Calu3 (cell line): ENCODE measurements at regions of chr19 and their contacts with region 1.

Region 1: GRCh38 chr19:6138066-6138465 is 2.6 kb downstream of the ACSBG2 start:
- DNase-seq: no peak
- H3K4me3 Mint-ChIP-seq: no peak overlapping the region
- H3K27ac Mint-ChIP-seq: no peak overlapping the region
- H3K4me1 Mint-ChIP-seq: no peaks in the 10 kb centered on the region
- H3K27me3 Mint-ChIP-seq: no peaks in the 10 kb centered on the region
- CTCF ChIP-seq: no peak

Region 2: DNA sequence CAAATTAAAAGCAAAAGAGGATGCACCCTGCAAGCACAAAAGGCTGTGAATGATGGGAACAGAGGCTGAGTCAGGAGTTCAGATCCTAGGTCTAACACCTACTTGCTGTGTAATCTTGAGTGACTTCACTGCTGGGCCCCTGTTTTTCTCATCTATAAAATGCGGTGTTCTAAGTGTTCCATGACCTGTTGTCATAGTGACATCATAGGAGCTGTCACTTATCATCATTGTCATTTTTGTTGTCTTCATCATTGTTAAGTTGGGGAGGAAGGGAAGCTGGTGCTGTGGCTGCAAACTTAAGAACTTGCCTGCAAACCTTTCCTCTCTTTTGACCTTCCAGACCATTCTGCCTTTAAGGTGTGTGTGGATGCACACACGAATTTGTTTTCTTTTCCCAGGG is 18.0 kb after region 1 on chr19:
- CTCF ChIA-PET with region 1: interaction called, 10 read pairs
- intact Hi-C with region 1: no loop called
- DNase-seq: no peak
- H3K4me3 Mint-ChIP-seq: no peak overlapping the region
- H3K27ac Mint-ChIP-seq: no peak overlapping the region
- H3K4me1 Mint-ChIP-seq: no peaks in the 10 kb centered on the region
- H3K27me3 Mint-ChIP-seq: peaks cover 12% of the 10 kb centered on the region
- CTCF ChIP-seq: no peak